ENCODE measurements at regions of chr11 and their contacts with region 1.

Region 1: DNA sequence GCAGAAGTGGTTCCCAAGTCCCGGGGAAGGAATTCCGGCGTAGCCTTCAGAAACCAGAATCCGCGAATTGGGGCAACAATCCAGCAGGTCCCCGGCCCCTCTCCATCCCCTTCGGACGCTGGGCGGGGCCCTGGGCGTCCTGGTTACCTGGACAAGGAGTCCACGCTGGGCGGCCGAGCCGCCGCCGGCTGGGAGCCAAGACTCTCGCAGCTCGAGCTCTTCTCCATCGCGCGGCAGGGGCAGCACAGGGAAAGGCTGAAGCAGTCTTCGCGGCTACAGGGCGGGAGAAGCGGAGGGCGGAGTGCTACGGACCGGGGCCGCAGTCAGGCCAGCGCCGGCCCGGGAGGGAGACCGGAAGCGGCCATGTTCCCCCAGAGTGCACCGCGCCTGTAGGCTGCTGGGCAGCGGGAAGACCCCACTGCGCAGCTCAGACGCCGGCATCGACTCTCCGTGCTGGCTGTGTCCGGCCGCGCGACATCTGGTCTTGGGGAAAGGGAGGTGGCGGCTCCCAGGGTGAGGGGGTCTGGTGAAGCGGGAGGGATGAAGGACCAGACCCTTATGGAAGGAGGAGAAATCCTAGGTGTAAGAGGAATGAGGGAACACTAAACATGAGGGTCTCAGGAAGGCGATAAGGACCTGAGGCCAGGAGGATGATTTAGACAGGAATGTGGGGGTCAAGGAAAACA is at the start of gene MTMR2:
- DNase-seq: peak; percentile 80 to 83
- ATAC-seq: peak; percentile 99 to 100 (median 100)
- H3K4me3 ChIP-seq: peak within 1 kb of the TSS; percentile 63 to 96 (median 84)
- H3K27ac ChIP-seq: peak within 1 kb of the TSS; percentile 86 to 98 (median 94)
- H3K4me1 ChIP-seq: peaks cover 0 to 42% (median 29%) of the 10 kb centered on the region in 9 donors
- H3K27me3 ChIP-seq: no peaks in the 10 kb centered on the region
- CTCF ChIP-seq: peak in 1 of 9 donors; percentile 5
- total RNA-seq, gene MTMR2: 16.3 to 23.1 (median 20.3) TPM

Region 2: DNA sequence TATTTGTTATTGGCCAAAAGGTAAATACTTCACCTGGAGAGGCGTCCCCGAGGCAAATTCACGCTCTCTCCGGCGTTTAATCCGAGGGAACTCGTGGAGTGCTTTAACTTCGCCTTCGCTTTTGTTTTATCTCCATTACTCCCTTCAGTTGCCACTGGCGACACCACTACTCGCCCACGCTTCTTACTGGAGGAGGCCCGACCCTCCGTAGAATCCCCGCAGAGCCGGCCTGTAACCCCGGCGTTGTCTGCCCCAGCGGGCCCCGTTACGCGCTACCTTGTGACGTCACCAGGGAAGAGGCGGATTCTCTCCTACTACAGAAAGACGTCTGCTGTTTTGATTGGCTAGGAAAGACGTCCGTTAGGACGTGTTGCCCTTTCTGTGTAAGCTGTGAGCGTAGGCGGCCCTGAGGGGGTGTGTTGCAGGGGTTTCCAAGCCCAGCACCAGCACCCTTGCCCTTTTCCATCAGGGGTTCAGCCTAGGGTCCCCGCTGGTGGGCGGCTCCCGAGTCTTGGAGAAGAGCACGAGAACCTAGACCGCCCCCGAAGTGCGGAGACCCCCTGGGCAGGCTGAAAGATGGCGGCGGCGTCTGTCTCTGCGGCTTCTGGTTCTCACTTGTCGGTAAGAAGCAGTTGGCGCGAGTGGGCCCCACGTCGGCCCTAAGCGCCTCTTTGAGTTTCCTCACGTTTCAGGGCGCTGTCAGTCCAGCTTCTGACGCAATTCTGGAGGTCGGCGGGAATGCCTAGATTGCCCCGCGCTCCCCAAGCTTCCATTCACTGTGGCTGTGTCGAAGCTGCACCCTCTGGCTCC is 133.5 kb before region 1 on chr11 and contains the start of gene CEP57:
- intact Hi-C with region 1: loop called in 1 of 10 experiments (anchors 5 kb)
- DNase-seq: peak; percentile 88 to 99
- ATAC-seq: peak; percentile 88 to 97 (median 94)
- H3K4me3 ChIP-seq: peak within 1 kb of the TSS; percentile 77 to 98 (median 90)
- H3K27ac ChIP-seq: peak within 1 kb of the TSS; percentile 93 to 100 (median 98)
- H3K4me1 ChIP-seq: peaks cover 0 to 31% (median 26%) of the 10 kb centered on the region in 9 donors
- H3K27me3 ChIP-seq: no peaks in the 10 kb centered on the region
- CTCF ChIP-seq: no peak
- total RNA-seq, gene CEP57: 17.3 to 28.5 (median 25.1) TPM

Region 3: GRCh38 chr11:95884376-95884775 is 39.5 kb before region 1 on chr11:
- intact Hi-C with region 1: loop called in 1 of 10 experiments (anchors 1 kb)
- DNase-seq: no peak
- ATAC-seq: no peak
- H3K4me3 ChIP-seq: no peak overlapping the region
- H3K27ac ChIP-seq: no peak overlapping the region
- H3K4me1 ChIP-seq: peaks cover 0 to 28% (median 4%) of the 10 kb centered on the region in 9 donors
- H3K27me3 ChIP-seq: no peaks in the 10 kb centered on the region
- CTCF ChIP-seq: no peak

Region 4: GRCh38 chr11:95991545-95991944 is 67.7 kb after region 1 on chr11:
- intact Hi-C with region 1: loop called in 1 of 10 experiments (anchors 5 kb)
- DNase-seq: no peak
- ATAC-seq: no peak
- H3K4me3 ChIP-seq: no peak overlapping the region
- H3K27ac ChIP-seq: peak overlapping the region in 2 of 10 donors; percentile 3 to 16
- H3K4me1 ChIP-seq: peaks cover 0 to 14% (median 0%) of the 10 kb centered on the region in 9 donors
- H3K27me3 ChIP-seq: no peaks in the 10 kb centered on the region
- CTCF ChIP-seq: no peak

Region 5: DNA sequence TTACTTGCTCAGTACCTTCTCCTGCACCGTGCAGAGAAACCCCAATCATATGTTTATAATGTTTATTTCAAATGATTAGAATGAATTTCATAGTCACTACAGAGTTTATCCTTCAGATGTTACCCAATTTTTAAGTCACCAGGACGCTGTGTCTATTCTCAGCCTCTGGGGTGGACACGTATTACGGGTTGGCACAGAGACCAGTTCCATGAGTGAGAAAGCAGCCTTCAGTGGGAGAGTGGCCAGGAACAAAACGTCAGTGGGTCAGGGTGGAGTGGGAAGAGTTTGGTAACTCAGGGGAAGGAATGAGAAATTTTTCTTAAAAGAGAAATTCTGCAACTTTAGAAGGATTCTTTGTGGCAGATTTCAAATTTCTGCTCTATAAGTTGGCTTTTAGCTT is 77.2 kb after region 1 on chr11:
- intact Hi-C with region 1: loop called in 1 of 10 experiments (anchors 5 kb)
- DNase-seq: peak; percentile 61 to 81
- ATAC-seq: peak; percentile 90 to 100 (median 97)
- H3K4me3 ChIP-seq: peak overlapping the region in 1 of 10 donors; percentile 4
- H3K27ac ChIP-seq: peak overlapping the region in 9 of 10 donors; percentile 21 to 76 (median 64)
- H3K4me1 ChIP-seq: peaks cover 0 to 34% (median 25%) of the 10 kb centered on the region in 9 donors
- H3K27me3 ChIP-seq: no peaks in the 10 kb centered on the region
- CTCF ChIP-seq: no peak

Region 6: GRCh38 chr11:96841792-96842191 is 917.9 kb after region 1 on chr11:
- intact Hi-C with region 1: no loop called
- DNase-seq: no peak
- ATAC-seq: no peak
- H3K4me3 ChIP-seq: no peak overlapping the region
- H3K27ac ChIP-seq: no peak overlapping the region
- H3K4me1 ChIP-seq: no peaks in the 10 kb centered on the region
- H3K27me3 ChIP-seq: no peaks in the 10 kb centered on the region
- CTCF ChIP-seq: no peak

Measured in heart right ventricle (tissue), 16 donors.